ENCODE measurements at regions of chr19 and their contacts with region 1.

Region 1: DNA sequence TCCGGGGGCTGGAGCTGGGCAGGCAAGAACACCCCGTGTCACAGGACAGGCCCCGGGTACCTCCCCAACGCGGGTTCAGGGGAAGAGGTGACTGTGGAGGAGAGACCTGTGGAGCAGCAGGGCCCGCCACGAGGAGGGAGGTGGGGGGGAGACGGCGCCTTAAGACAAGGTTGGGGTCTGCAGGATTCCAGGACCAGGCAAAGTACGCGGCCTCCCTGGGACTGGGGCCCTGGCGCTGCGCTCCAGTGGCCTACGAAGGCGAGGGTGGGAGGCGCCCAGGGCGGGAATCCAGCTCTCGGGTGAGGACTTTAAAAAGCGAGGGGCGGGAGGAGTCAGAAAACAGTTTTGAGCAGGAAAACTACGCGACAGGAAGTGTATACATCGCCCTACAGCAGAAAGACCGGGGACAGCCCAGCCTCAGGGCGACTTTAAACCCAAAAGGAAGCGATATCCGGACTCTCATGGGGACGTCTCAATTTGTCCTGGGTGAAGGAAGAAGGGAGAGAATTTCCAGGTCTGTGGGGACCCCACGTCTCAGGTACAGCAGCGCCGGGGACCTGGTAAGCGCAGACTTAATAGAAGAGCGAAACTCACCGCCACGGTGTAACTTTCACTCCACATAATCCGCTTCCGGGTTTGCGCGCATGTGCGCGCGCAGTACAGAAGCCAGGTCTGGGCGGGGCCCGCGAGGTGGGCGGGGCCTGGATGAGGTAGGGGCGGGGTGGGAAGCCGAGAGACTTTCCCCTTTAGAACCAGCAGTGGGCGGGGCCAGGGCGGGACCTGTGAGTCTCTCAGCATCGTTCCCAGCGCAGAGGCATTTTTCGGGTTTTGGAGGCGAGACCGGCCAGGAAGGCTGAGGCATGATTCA is at the start of gene ZNF83:
- DNase-seq: peak; percentile 94
- H3K4me3 Mint-ChIP-seq: peak within 1 kb of the TSS; percentile 93
- H3K27ac Mint-ChIP-seq: peak within 1 kb of the TSS; percentile 95
- H3K4me1 Mint-ChIP-seq: peaks cover 26% of the 10 kb centered on the region
- H3K27me3 Mint-ChIP-seq: no peaks in the 10 kb centered on the region
- total RNA-seq, gene ZNF83: 23.5 and 25.8 TPM in 2 replicates

Region 2: DNA sequence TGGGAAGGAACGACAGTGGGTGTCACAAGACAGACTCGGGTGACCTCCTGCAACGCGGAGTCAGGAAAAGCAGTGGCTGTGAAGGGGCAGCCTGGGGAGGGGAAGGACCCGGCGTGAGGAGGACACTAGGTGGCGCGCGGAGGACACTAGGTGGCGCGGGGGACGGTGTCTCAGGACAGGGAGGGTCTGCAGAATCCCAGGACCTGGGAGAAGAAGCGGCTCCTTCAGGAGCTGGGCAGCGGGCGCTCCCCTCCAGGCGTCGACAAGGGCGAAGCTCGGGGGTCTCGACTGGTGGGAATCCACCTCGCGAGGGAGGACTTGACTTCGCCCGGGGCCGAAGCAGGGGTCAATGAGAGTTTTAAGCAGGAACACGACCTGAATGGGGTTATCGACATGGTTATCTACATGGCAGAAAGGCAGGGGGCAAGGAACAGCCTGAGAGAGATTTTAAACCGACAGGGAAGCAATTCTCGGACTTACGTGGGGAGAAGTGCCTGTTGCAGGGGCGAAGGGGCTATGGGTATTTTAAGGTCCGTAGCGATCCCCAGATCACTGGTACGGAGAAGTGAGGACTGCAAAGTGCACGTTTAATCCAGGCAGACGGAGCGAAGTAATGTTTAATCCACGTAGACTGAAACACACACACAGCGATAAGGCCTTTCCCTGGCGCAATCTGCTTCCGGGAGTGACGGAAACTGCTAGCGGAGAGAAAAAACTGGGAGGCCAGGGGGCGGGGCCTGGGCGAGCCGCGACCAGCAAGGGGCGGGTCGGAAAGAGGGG is 498.5 kb before region 1 on chr19 and contains the start of gene ZNF616:
- intact Hi-C with region 1: loop called (anchors 1 kb)
- DNase-seq: peak; percentile 94
- H3K4me3 Mint-ChIP-seq: peak within 1 kb of the TSS; percentile 98
- H3K27ac Mint-ChIP-seq: peak within 1 kb of the TSS; percentile 94
- H3K4me1 Mint-ChIP-seq: peaks cover 23% of the 10 kb centered on the region
- H3K27me3 Mint-ChIP-seq: no peaks in the 10 kb centered on the region
- total RNA-seq, gene ZNF616: 4.1 and 6.7 TPM in 2 replicates

Region 3: DNA sequence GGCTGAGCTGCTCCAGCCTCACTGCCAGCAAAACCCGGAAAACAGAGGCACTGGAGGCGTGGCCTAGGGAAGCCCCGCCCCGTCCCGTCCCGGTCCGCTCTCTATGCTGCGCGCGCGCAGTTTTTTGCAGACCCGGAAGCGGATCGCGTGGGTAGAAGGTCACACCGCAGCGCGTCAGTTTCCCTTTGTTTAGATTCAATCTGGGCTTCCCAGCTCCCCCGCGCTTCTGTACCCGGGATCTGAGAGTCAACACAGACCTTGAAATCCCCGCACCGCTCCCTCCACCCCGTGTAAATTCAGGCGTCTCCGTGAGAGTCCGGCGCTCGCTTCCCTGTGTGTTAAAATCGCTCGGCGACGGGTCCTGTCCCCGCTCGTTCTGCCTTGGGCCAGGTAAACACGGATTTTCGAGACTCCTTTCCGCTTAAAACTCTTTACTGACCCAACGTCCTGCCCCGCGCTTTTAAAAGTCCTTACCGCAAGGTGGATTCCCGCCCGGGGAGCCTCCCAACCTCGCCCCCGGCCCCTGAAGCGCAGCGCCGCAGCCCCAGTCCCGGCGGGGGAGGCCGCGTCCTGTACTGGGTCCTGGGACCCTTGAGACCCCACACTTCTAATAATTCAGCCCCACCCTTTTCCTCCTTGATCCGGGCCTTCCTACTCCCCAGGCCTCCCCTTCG is 301.7 kb before region 1 on chr19 and contains the start of gene ZNF610:
- intact Hi-C with region 1: loop called (anchors 1 kb)
- DNase-seq: peak; percentile 77
- H3K4me3 Mint-ChIP-seq: peak within 1 kb of the TSS; percentile 88
- H3K27ac Mint-ChIP-seq: peak within 1 kb of the TSS; percentile 91
- H3K4me1 Mint-ChIP-seq: peaks cover 5% of the 10 kb centered on the region
- H3K27me3 Mint-ChIP-seq: no peaks in the 10 kb centered on the region
- total RNA-seq, gene ZNF610: 0.29 and 0.36 TPM in 2 replicates

Region 4: GRCh38 chr19:52570000-52570861 is 67.7 kb before region 1 on chr19 and contains the start of gene ZNF701:
- intact Hi-C with region 1: loop called (anchors 1 kb)
- DNase-seq: peak; percentile 94
- H3K4me3 Mint-ChIP-seq: peak within 1 kb of the TSS; percentile 94
- H3K27ac Mint-ChIP-seq: peak within 1 kb of the TSS; percentile 94
- H3K4me1 Mint-ChIP-seq: peaks cover 20% of the 10 kb centered on the region
- H3K27me3 Mint-ChIP-seq: no peaks in the 10 kb centered on the region
- total RNA-seq, gene ZNF701: 16.0 and 18.3 TPM in 2 replicates

Region 5: GRCh38 chr19:52734893-52735661 is 97.1 kb after region 1 on chr19 and contains the start of gene ZNF611:
- intact Hi-C with region 1: loop called (anchors 1 kb)
- DNase-seq: peak; percentile 97
- H3K4me3 Mint-ChIP-seq: peak within 1 kb of the TSS; percentile 91
- H3K27ac Mint-ChIP-seq: peak within 1 kb of the TSS; percentile 92
- H3K4me1 Mint-ChIP-seq: peaks cover 27% of the 10 kb centered on the region
- H3K27me3 Mint-ChIP-seq: no peaks in the 10 kb centered on the region
- total RNA-seq, gene ZNF611: 17.0 and 21.0 TPM in 2 replicates

Region 6: DNA sequence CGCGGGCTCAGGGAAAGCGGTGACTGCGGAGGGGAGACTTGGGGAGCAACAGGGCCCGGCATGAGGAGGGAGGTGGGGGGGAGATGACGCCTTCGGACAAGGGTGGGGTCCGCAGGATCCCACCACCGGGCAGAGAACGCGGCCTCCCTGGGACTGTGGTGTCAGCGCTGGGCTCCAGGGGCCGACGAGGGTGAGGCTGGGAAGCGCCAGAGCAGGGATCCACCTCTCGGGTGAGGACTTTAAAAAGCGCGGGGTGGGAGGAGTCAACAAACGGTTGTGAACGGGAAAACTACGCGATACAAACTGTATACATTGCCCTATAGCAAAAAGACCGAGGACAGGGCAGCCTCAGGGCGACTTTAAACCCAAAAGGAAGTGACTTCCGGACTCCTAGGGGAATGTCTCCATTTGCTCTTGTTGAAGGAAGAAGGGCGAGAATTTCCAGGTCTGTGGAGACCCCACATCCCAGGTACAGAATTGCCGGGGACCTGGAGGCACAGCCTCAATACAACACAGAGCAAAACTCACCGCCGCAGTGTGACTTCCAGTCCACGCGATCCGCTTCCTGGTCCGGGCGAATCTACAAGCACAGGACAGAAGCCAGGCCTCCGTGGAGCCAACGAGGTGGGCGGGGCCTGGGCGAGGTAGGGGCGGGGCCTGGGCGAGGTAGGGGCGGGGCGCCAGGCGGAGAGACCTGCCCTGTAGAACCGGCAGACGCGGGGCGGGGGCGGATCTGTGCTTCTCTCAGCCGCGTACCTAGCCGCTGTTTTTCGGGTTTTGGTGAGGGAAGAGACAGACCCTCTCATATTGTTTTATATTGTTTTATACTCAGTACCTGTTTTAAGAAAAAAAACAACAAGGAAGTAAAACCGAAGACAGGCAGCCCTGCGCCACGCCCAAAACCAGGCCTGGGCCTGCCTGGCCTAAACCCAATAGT is 285.2 kb after region 1 on chr19 and contains the start of gene ZNF888:
- intact Hi-C with region 1: loop called (anchors 2 kb)
- DNase-seq: peak; percentile 77
- H3K4me3 Mint-ChIP-seq: peak within 1 kb of the TSS; percentile 93
- H3K27ac Mint-ChIP-seq: peak within 1 kb of the TSS; percentile 96
- H3K4me1 Mint-ChIP-seq: peaks cover 31% of the 10 kb centered on the region
- H3K27me3 Mint-ChIP-seq: no peaks in the 10 kb centered on the region
- total RNA-seq, gene ZNF888: 4.2 and 4.6 TPM in 2 replicates

Region 7: DNA sequence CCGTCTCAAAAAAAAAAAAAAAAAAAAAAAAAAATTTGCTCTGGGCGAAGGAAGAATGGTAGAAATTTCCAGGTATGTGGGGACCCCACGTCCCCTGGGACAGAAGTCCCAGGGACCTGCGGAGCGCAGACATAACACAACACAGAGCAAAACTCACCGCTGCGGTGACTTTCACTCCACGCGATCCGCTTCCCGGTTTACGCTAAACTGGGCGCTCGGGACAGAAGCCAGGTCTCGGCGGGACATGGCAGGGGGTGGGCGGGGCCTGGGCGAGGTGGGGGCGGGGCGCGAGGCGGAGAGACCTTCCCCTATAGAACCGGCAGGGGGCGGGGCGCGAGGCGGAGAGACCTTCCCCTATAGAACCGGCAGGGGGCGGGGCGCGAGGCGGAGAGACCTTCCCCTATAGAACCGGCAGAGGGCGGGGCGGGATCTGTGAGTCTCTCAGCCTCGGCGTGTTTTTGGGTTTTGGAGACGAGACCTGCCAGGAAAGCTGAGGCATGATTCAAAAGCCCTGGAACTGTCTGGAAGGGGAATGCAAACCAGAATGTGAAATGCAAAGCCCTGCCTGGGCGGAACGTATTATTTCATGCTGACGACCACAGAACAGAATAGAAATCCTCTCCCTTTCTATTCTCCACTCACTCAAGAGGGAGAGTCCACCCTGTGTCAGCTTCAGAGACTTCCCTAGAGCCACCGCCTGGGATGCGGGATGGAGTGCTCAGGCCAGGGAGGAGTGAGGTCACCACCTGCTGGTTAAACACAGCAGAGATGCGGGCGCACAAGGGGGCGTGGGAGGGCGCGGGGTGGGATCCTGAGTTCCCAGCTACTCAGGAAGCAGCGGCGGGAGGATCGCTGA is 355.6 kb after region 1 on chr19:
- intact Hi-C with region 1: loop called (anchors 1 kb)
- DNase-seq: peak; percentile 79
- H3K4me3 Mint-ChIP-seq: peak overlapping the region; percentile 82
- H3K27ac Mint-ChIP-seq: no peak overlapping the region
- H3K4me1 Mint-ChIP-seq: peaks cover 6% of the 10 kb centered on the region
- H3K27me3 Mint-ChIP-seq: peaks cover 4% of the 10 kb centered on the region

Measured in activated T-helper 1 cell treated with anti-CD3 and anti-CD28 coated beads, Interleukin-12 subunit alpha, Interleukin-12 subunit beta, Interleukin-2, Interleukin-4 antibody, amounts not matched to agents 30 ng/mL and 10 ng/mL and 1 ng/mL, durations not matched to agents 14 hours and 24 hours and 36 hours (primary cell).